ENCODE measurements at regions of chr5 and their contacts with region 1.

Region 1: DNA sequence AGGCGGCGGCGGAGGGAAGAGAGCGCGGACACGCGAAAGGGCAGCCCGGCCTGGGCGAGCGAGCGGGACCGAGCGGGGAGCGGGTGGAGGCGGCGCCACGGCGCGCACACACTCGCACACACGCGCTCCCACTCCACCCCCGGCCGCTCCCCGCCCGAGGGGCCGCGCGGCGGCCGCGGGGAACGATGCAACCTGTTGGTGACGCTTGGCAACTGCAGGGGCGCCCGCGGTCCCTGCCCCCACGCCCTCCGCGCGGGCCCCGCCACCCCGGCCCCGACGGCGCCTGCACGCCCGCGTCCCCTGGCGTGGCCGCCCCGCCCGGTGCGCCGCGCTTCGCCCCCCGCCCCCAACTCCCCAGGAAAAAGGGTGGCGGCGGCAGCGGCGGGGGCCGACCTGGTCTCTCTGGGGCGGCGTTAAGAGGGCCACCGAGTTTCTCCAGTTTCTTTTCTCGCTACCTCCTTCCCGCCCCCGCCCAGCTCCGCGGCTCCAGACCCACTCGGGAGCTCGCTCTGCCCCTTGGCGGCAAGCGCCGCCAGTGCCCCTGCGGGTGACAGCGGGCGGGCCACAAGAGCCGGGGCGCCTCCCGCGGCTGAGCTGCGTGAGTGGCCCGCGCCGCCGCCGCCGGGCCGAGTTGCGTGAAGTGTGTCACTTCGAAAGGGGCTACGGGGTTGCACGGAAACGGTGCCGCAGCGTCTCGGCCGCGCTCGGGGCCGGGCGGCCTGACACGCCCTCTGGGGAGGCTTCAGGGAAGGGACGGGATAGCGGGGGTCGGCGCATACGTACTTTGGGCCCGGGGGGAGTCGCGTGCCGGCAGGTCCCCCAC is at the start of gene NR3C1:
- DNase-seq: peak; percentile 96
- total RNA-seq, gene NR3C1: 67.8 to 73.5 TPM

Region 2: DNA sequence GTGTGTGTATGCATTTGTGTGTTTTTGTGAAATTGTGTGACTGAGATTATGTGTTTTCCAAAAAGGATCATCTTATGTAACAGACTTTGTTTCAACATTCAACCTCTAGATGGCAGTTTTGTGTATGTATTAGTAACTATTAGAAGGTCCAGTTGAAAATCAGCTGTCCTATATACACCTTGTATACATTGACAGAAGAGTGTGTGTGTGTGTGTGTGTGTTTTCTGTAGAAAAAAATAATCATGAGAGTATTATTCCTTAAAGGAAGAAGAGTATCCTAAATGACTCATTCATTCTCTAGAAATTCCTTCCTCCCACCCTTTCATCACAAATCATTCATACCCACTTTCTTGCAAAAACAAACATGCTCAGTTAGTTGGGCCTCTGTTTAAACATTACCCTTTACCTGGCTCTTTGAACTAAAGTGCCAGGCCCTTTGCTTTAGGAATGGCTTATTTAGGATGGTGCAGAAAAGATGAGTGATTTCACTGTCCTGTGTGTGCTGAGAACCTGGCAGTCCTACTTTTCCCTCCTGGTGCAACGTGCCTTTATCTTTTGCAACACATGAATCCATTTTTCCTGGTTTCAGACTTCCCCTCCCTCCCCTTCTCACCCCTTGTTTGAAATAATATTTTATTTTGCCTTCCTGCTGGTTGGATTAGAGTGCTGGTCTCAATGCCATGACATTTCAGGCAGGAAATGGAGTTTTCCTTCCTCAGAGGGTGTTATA is 481.4 kb before region 1 on chr5:
- intact Hi-C with region 1: loop called in 1 of 2 experiments (anchors 10 kb)
- DNase-seq: no peak

Region 3: GRCh38 chr5:143016777-143017516 is 386.9 kb before region 1 on chr5:
- intact Hi-C with region 1: loop called (anchors 5 to 10 kb)
- DNase-seq: no peak

Region 4: DNA sequence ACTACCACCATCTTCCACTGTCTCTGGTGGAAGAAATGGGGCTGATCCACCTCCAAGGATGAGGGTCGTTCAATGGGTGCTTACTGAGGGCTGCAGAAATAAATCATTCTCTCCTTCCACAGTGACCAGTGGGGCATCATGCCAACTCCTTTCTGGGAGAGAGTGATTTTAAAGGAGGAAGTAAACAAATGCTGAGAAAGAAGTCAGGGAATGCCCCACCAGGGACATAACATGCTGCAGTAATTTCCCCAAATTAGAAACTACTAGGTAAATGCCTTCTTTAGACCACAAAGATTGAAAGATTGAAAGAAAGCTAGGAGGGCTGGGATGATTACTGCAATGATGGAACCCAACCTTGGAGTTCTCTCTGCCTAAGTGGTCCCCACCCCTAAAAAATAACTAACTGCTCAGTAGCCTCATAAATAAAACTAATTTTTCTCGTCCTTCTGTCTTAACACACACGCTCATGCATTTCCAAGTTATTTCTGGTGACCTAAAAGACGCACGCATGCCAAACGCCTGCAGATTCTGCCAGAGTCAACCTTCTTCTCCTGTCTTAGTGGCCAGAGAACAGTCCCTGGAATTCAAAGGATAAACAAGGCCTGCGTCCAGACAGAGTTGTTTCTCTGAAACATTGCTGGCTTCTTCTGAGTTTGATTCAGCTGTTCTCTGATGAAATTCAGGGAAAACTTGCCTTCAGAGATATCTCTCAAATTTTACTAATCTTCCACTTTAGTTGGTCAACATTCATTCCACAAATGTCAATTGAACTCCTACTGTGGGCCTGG is 250.3 kb before region 1 on chr5:
- intact Hi-C with region 1: loop called in 1 of 2 experiments (anchors 10 kb)
- DNase-seq: peak; percentile 91

Region 5: DNA sequence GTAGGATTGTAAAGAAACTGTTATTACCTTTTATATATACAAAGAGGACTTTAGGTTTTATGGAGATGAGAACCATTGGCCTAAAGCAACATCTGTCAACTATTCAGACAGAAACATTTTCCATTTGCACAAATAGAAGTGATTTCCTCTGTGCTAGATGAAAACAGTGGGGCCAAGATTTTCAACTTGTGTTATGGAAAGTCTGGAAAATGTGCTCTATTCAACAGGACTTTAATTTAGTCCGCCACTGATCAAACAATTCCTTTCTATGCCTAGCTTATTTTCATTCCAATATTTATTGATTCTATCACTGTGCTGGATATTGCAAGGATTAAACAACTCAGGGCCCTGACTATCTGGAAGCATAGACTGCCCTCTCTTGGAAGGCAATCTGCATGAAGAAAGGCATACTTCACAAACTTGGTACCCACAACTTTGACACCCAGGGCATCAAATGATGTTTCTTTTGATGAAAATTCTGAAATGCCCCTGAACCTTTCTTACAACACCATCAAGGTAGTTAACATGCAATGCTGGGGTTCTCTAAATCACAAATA is 281.5 kb after region 1 on chr5:
- intact Hi-C with region 1: no loop called
- DNase-seq: no peak

Region 6: GRCh38 chr5:143824851-143825720 is 421.3 kb after region 1 on chr5:
- intact Hi-C with region 1: loop called in 1 of 2 experiments (anchors 10 kb)
- DNase-seq: peak; percentile 91